Activated naive CD4-positive, alpha-beta T cell treated with anti-CD3 and anti-CD28 coated beads for 36 hours (primary cell): ENCODE measurements at regions of chr9 and their contacts with region 1.

Region 1: GRCh38 chr9:15485836-15486666 is 24.7 kb downstream of the PSIP1 start:
- DNase-seq: no peak
- H3K4me3 Mint-ChIP-seq: no peak overlapping the region
- H3K27ac Mint-ChIP-seq: peak overlapping the region; percentile 80
- H3K4me1 Mint-ChIP-seq: peaks cover 47% of the 10 kb centered on the region
- H3K27me3 Mint-ChIP-seq: no peaks in the 10 kb centered on the region

Region 2: GRCh38 chr9:15529566-15530324 is 43.7 kb after region 1 on chr9:
- CTCF ChIA-PET with region 1: interaction called, 3 read pairs
- intact Hi-C with region 1: loop called (anchors 1 kb)
- DNase-seq: no peak
- H3K4me3 Mint-ChIP-seq: no peak overlapping the region
- H3K27ac Mint-ChIP-seq: no peak overlapping the region
- H3K4me1 Mint-ChIP-seq: peaks cover 11% of the 10 kb centered on the region
- H3K27me3 Mint-ChIP-seq: no peaks in the 10 kb centered on the region

Region 3: DNA sequence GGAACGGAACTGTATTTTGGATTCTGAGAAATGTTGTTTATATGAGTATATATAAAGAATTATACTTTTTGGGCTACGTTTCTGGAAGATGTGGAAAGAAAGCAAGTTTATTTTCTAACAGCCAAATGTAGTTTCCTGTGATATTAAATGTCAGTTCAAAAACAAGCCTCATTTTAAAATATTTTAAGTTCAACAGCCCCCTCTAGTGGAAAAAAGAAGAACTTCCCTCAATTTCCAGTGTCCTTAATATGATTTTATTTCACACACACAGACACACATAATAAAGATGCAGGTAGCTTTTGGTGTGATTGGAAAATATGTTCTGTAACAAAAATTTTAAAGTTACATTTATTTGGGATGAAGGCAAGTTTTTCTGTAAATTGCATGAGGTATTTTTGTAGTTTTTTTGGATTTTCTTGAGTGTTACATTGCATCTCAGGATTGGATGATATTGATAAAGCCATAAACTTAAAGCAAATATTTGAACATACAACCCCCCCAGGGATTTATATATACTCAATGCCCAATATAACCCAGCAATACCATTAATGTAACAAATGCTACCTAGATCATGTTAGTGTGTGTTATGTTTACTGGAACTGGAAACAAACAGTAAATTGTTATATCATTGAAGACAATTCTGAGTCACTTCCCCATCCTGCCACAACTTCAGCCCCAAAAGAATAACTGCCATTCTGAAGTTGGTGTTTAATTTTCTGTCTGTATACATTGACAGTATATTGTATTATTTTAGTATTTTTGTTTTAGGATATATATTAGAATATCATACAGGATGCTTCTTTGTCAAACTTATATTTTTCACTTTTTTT is 120.8 kb after region 1 on chr9:
- CTCF ChIA-PET with region 1: no interaction called
- intact Hi-C with region 1: loop called (anchors 5 kb)
- DNase-seq: no peak
- H3K4me3 Mint-ChIP-seq: no peak overlapping the region
- H3K27ac Mint-ChIP-seq: no peak overlapping the region
- H3K4me1 Mint-ChIP-seq: no peaks in the 10 kb centered on the region
- H3K27me3 Mint-ChIP-seq: no peaks in the 10 kb centered on the region

Region 4: GRCh38 chr9:15735083-15735974 is 249.3 kb after region 1 on chr9:
- CTCF ChIA-PET with region 1: no interaction called
- intact Hi-C with region 1: no loop called
- DNase-seq: no peak
- H3K4me3 Mint-ChIP-seq: no peak overlapping the region
- H3K27ac Mint-ChIP-seq: no peak overlapping the region
- H3K4me1 Mint-ChIP-seq: no peaks in the 10 kb centered on the region
- H3K27me3 Mint-ChIP-seq: no peaks in the 10 kb centered on the region